ENCODE measurements at regions of chr1 and their contacts with region 1.

Region 1: DNA sequence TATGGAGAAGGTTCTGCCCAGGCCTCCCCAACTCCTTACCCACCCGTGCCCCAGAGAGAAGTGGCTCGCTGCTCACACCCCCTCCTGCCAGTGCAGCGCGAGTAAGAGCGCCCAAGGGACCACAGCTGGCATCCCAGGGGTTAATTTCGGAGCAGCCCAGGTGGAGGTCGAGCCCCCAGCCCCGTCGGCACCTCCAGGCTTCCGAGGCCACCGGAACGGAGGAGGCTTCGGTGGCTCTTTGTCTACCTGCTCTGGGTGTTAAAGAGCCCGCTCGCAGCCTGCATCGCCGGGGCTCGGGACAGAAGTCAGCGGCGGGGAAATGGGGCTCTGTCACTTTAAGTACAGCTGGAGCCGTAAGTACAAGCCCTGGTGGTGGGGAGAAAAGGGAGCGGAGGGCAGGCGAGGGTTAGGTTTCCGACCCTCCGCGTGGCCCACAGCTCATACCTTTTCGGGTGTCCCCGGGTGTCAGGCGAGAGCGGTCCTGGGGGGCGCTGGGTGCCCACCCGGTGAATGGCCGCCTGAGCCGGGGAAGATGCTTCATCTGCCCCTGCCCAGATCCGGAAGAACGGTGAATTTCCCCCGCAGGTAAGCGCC is 89.4 kb upstream of the IPO9 start:
- DNase-seq: peak in 1 of 2 donors; percentile 81
- H3K4me3 ChIP-seq: peak overlapping the region; percentile 89 to 98
- H3K27ac ChIP-seq: peak overlapping the region; percentile 97 to 98
- H3K4me1 ChIP-seq: peaks cover 14 to 54% of the 10 kb centered on the region in 2 donors
- H3K27me3 ChIP-seq: no peaks in the 10 kb centered on the region
- CTCF ChIP-seq: peak in 1 of 3 experiments; percentile 12

Region 2: GRCh38 chr1:201715801-201716741 is 23.5 kb before region 1 on chr1:
- intact Hi-C with region 1: loop called (anchors 1 kb)
- DNase-seq: no peak
- H3K4me3 ChIP-seq: peak overlapping the region in 1 of 2 donors; percentile 40
- H3K27ac ChIP-seq: peak overlapping the region; percentile 93 to 97
- H3K4me1 ChIP-seq: peaks cover 49 to 65% of the 10 kb centered on the region in 2 donors
- H3K27me3 ChIP-seq: no peaks in the 10 kb centered on the region
- CTCF ChIP-seq: no peak

Region 3: GRCh38 chr1:201721082-201722049 is 18.2 kb before region 1 on chr1:
- intact Hi-C with region 1: loop called (anchors 1 kb)
- DNase-seq: no peak
- H3K4me3 ChIP-seq: no peak overlapping the region
- H3K27ac ChIP-seq: peak overlapping the region; percentile 93 to 97
- H3K4me1 ChIP-seq: peaks cover 19 to 56% of the 10 kb centered on the region in 2 donors
- H3K27me3 ChIP-seq: no peaks in the 10 kb centered on the region
- CTCF ChIP-seq: no peak

Region 4: GRCh38 chr1:201778279-201779065 is 38.9 kb after region 1 on chr1:
- intact Hi-C with region 1: loop called (anchors 5 kb)
- DNase-seq: peak in 1 of 2 donors; percentile 81
- H3K4me3 ChIP-seq: peak overlapping the region in 1 of 2 donors; percentile 18
- H3K27ac ChIP-seq: peak overlapping the region; percentile 84 to 87
- H3K4me1 ChIP-seq: peaks cover 19 to 65% of the 10 kb centered on the region in 2 donors
- H3K27me3 ChIP-seq: no peaks in the 10 kb centered on the region
- CTCF ChIP-seq: no peak

Measured in ascending aorta (tissue), 2 donors.